ENCODE measurements at regions of chr17 and their contacts with region 1.

Region 1: DNA sequence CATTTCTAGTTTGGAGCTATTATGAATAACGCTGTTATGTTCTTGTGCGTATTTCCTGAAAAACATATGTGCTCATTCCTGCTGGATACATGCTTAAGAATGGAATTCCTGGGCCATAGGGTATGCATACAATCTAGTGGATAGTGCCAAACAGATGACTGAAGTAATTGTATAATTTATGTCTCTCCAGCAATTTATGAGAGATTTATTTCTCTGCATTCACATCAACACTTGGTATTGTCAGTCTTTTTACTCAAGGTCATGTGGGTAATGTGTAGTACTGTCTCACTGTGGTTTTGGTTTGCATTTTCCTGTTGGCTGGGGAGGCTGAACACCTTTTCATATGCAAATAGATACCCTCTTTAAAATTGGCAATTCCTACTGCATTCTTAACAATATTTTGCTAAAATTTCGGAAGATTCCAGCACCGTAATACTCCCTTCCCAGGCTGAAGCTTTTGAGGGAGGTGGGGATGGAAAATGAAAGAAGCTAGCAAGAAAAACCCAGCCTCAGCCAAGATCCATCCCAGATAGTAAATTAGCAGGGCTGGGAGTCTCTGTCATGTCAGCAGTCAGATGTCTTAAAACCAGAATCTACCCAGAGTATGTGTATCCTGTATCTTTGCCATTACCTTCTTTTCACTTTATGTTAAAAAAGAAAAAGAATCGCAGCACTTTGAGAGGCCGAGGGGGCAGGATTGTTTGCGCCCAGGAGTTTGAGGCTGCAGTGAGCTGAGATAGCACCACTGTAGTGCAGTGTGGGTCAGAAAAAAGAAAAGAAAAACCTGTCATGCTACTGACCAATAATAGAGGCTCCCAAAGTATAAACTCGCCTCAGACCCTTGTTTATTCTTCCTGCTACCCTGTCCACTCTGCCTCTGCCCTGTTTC is 204.9 kb downstream of the LGALS9B start:
- DNase-seq: peak in 1 of 35 experiments; percentile 46
- ATAC-seq: peak; percentile 83 to 95 (median 90)
- H3K4me3 ChIP-seq: peak overlapping the region in 1 of 2 donors; percentile 15
- H3K4me3 Mint-ChIP-seq: peak overlapping the region; percentile 6 to 70 (median 45)
- H3K27ac ChIP-seq: no peak overlapping the region
- H3K27ac Mint-ChIP-seq: peak overlapping the region; percentile 81 to 90
- H3K4me1 ChIP-seq: peaks cover 27 to 38% of the 10 kb centered on the region in 2 experiments
- H3K4me1 Mint-ChIP-seq: peaks cover 41 to 48% (median 42%) of the 10 kb centered on the region in 3 donors
- H3K27me3 ChIP-seq: no peaks in the 10 kb centered on the region
- H3K27me3 Mint-ChIP-seq: no peaks in the 10 kb centered on the region

Region 2: GRCh38 chr17:20234276-20234675 is 28.2 kb before region 1 on chr17:
- CTCF ChIA-PET with region 1: interaction called in 1 of 2 experiments, 3 read pairs
- POLR2A ChIA-PET with region 1: interaction called in 1 of 2 experiments, 12 read pairs
- DNase-seq: peak in 34 of 35 experiments; percentile 8 to 70 (median 38)
- ATAC-seq: peak; percentile 92 to 99 (median 98)
- H3K4me3 ChIP-seq: no peak overlapping the region
- H3K4me3 Mint-ChIP-seq: peak overlapping the region; percentile 39 to 68 (median 54)
- H3K27ac ChIP-seq: peak overlapping the region; percentile 25
- H3K27ac Mint-ChIP-seq: peak overlapping the region; percentile 85 to 93
- H3K4me1 ChIP-seq: peaks cover 15 to 31% of the 10 kb centered on the region in 2 experiments
- H3K4me1 Mint-ChIP-seq: peaks cover 33 to 46% (median 42%) of the 10 kb centered on the region in 3 donors
- H3K27me3 ChIP-seq: no peaks in the 10 kb centered on the region
- H3K27me3 Mint-ChIP-seq: no peaks in the 10 kb centered on the region

Region 3: DNA sequence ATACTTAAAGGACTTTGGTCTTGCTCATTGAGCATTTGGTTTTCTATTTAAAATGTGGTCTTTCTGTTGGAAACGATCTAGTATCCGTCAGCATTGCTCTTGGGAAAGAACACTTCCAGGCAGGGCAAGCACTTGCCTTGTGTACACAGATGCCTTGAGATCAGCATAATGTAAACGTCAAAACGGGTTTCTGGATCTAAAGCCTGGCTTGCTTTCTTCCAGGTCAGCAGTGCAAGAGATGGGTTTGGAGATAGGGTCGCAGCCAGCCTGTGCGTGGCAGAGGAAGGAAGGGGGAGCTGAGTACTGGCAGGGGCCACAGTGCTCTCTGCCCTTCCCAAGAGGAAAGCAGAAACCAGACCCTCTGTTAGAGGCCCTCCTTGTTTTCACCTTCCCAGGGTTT is 29.4 kb after region 1 on chr17:
- CTCF ChIA-PET with region 1: no interaction called
- POLR2A ChIA-PET with region 1: no interaction called
- DNase-seq: no peak
- ATAC-seq: no peak
- H3K4me3 ChIP-seq: no peak overlapping the region
- H3K4me3 Mint-ChIP-seq: no peak overlapping the region
- H3K27ac ChIP-seq: no peak overlapping the region
- H3K27ac Mint-ChIP-seq: no peak overlapping the region
- H3K4me1 ChIP-seq: no peaks in the 10 kb centered on the region
- H3K4me1 Mint-ChIP-seq: peaks cover 0 to 3% (median under 1%) of the 10 kb centered on the region in 3 donors
- H3K27me3 ChIP-seq: no peaks in the 10 kb centered on the region
- H3K27me3 Mint-ChIP-seq: no peaks in the 10 kb centered on the region

Measured in T-cell (primary cell).